HEK293 (cell line): ENCODE measurements at regions of chr1 and their contacts with region 1.

Region 1: GRCh38 chr1:242017584-242018233 is 18.8 kb upstream of the MAP1LC3C start:
- H3K4me3 ChIP-seq: no peak overlapping the region
- H3K27ac ChIP-seq: no peak overlapping the region
- H3K4me1 ChIP-seq: no peaks in the 10 kb centered on the region
- CTCF ChIP-seq: peak; percentile 73

Region 2: DNA sequence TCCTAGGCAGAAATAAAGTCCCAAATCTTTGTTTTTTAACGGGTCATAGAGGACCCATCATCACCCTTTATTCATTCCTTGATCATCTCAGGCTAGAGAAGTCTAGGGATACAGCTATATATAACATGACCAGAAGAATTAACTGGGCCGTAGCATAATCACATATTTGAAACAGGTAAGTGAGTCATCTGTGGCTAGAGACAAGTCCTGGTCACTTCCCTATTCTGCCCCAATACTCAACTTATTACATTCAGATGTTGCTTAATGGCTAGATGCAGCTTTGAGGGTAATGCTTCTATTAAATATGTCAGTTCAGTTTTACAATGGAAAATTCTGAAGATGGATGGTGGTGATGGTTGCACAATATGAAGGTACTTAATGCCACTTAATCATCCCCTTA is 122.7 kb before region 1 on chr1:
- CTCF ChIA-PET with region 1: interaction called, 104 read pairs
- POLR2A ChIA-PET with region 1: no interaction called
- H3K4me3 ChIP-seq: no peak overlapping the region
- H3K27ac ChIP-seq: no peak overlapping the region
- H3K4me1 ChIP-seq: no peaks in the 10 kb centered on the region
- CTCF ChIP-seq: no peak

Region 3: GRCh38 chr1:242005866-242006565 is 11.7 kb before region 1 on chr1:
- CTCF ChIA-PET with region 1: interaction called, 12 read pairs
- POLR2A ChIA-PET with region 1: no interaction called
- H3K4me3 ChIP-seq: no peak overlapping the region
- H3K27ac ChIP-seq: no peak overlapping the region
- H3K4me1 ChIP-seq: no peaks in the 10 kb centered on the region
- CTCF ChIP-seq: no peak

Region 4: DNA sequence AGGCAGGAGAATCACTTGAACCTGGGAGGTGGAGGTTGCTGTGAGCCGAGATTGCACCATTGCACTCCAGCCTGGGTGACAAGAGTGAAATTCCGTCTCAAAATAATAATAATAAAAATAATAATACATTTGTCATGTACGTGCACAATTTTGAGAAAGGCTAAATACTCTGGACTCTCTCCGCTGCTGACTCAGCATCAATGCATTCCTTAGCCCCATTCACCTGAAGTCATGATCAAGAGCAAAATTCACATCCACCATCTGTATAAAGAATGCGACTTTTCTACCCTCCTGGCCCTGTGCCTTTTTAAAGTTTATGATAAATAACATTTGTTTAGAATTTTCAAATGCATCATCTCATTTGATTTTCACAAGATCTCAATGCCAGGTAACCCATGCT is 16.7 kb after region 1 on chr1:
- CTCF ChIA-PET with region 1: no interaction called
- POLR2A ChIA-PET with region 1: no interaction called
- H3K4me3 ChIP-seq: no peak overlapping the region
- H3K27ac ChIP-seq: no peak overlapping the region
- H3K4me1 ChIP-seq: no peaks in the 10 kb centered on the region
- CTCF ChIP-seq: no peak

Region 5: GRCh38 chr1:242128951-242129502 is 111.3 kb after region 1 on chr1:
- CTCF ChIA-PET with region 1: interaction called, 17 read pairs
- POLR2A ChIA-PET with region 1: interaction called, 3 read pairs
- H3K4me3 ChIP-seq: no peak overlapping the region
- H3K27ac ChIP-seq: no peak overlapping the region
- H3K4me1 ChIP-seq: no peaks in the 10 kb centered on the region
- CTCF ChIP-seq: peak; percentile 33; the same call in 1 of the 2 replicates